HepG2 (cell line): ENCODE measurements at regions of chr3 and their contacts with region 1.

Region 1: DNA sequence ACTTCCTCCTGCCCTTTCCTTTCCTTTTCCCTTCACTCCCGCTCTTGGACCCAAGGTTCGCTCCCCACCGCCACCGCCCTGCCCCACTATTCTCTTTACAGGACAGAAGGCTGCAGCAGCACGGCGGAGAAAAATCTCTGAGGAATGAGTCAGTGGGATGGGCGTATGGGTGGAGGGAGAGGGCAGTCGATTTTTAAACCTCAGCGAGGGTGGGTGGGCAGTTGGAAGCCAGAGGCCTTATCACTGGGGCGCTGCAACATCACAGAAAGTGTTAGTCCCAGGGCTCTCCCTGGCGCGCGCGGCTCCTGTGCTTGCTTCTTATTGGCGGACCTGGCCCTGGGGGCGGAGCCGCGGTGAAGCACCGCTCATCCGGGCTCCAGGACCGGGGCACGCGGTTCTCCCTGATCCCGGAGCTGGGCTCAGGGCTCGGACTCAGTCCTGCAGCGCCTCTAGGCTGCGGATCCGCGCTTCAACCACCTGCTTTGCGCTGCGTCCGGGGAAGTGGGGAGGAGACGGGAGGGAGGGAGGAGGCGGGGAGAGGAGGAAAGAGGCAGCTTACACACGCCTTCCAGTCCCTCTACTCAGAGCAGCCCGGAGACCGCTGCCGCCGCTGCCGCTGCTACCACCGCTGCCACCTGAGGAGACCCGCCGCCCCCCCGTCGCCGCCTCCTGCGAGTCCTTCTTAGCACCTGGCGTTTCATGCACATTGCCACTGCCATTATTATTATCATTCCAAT is at the start of gene ALCAM:
- DNase-seq: peak; percentile 87
- ATAC-seq: peak; percentile 87
- H3K4me3 ChIP-seq: peak within 1 kb of the TSS; percentile 81 to 91 (median 86)
- H3K27ac ChIP-seq: peak within 1 kb of the TSS; percentile 90
- H3K4me1 ChIP-seq: peaks cover 26% of the 10 kb centered on the region
- H3K27me3 ChIP-seq: no peaks in the 10 kb centered on the region; a peak in 1 of 5 replicates
- CTCF ChIP-seq: peak; percentile 95
- EP300 ChIP-seq: no peak
- POLR2A ChIP-seq: peak in 1 of 2 experiments; percentile 72; a peak in 3 of 4 replicates
- RAD21 ChIP-seq: peak; percentile 93
- total RNA-seq, gene ALCAM: 17.7 and 33.1 TPM in 2 replicates

Region 2: GRCh38 chr3:104596551-104596950 is 769.9 kb before region 1 on chr3:
- CTCF ChIA-PET with region 1: interaction called, 3 read pairs
- POLR2A ChIA-PET with region 1: no interaction called
- in situ Hi-C with region 1: loop called (anchors 25 kb)
- intact Hi-C with region 1: loop called (anchors 2 kb)
- DNase-seq: peak; percentile 25
- ATAC-seq: peak; percentile 88
- H3K4me3 ChIP-seq: no peak overlapping the region
- H3K27ac ChIP-seq: no peak overlapping the region
- H3K4me1 ChIP-seq: no peaks in the 10 kb centered on the region
- H3K27me3 ChIP-seq: no peaks in the 10 kb centered on the region
- CTCF ChIP-seq: peak; percentile 60
- EP300 ChIP-seq: no peak
- POLR2A ChIP-seq: no peak
- RAD21 ChIP-seq: no peak

Region 3: GRCh38 chr3:104628185-104628789 is 738.2 kb before region 1 on chr3:
- CTCF ChIA-PET with region 1: no interaction called
- POLR2A ChIA-PET with region 1: no interaction called
- in situ Hi-C with region 1: loop called (anchors 25 kb)
- intact Hi-C with region 1: loop called (anchors 2 kb)
- DNase-seq: peak; percentile 32
- ATAC-seq: peak; percentile 88
- H3K4me3 ChIP-seq: no peak overlapping the region
- H3K27ac ChIP-seq: no peak overlapping the region
- H3K4me1 ChIP-seq: no peaks in the 10 kb centered on the region
- H3K27me3 ChIP-seq: no peaks in the 10 kb centered on the region
- CTCF ChIP-seq: peak; percentile 53
- EP300 ChIP-seq: no peak
- POLR2A ChIP-seq: no peak
- RAD21 ChIP-seq: no peak

Region 4: DNA sequence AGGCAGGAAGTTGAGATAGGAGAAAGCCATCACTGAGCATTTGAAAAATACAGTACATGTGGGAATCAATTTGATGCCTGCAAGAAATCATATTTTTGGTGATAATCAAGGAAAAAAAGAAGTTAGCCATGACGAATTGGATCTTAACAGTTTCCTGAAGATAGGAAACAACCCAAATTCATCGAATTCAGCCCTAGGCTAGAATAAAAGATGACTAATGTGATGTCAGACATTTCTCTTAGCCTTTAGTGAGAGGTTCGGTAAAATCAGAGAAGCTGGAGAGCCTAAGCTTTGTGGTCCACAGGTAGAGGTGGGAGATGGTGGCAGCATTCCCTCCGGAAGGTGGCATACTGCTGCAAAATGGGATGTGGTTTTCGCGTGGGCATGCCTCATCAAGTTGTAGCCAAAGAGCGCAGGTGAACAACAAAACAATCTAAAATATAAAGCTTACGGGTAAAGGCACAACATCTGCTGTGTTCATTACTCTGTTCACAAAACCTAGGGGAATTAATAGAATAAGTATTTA is 143.9 kb before region 1 on chr3:
- CTCF ChIA-PET with region 1: interaction called, 3 read pairs
- POLR2A ChIA-PET with region 1: no interaction called
- in situ Hi-C with region 1: no loop called
- intact Hi-C with region 1: loop called (anchors 1 kb)
- DNase-seq: peak; percentile 17
- ATAC-seq: peak; percentile 91
- H3K4me3 ChIP-seq: no peak overlapping the region
- H3K27ac ChIP-seq: no peak overlapping the region
- H3K4me1 ChIP-seq: no peaks in the 10 kb centered on the region
- H3K27me3 ChIP-seq: no peaks in the 10 kb centered on the region
- CTCF ChIP-seq: peak; percentile 67
- EP300 ChIP-seq: no peak
- POLR2A ChIP-seq: no peak
- RAD21 ChIP-seq: no peak

Region 5: DNA sequence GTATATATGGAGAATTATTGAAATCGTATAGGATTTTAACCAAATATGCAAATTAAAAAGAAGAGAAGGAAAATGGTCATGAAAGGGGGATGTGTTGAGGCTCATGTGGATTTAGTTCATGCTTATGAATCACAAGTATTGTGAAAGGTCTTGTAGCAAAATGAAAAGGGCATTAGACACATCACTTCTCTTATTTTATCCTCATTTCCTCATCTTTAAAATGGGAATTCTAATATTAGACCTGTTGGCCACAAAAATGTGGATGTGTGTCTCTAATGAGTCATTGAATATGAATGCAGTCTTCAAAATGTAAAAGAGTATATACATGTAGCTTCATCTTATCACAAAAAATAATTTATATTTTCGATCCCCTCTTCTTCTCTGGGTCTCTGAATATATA is 14.7 kb before region 1 on chr3:
- CTCF ChIA-PET with region 1: no interaction called
- POLR2A ChIA-PET with region 1: no interaction called
- in situ Hi-C with region 1: no loop called
- intact Hi-C with region 1: no loop called
- DNase-seq: no peak
- ATAC-seq: no peak
- H3K4me3 ChIP-seq: no peak overlapping the region
- H3K27ac ChIP-seq: no peak overlapping the region
- H3K4me1 ChIP-seq: no peaks in the 10 kb centered on the region
- H3K27me3 ChIP-seq: no peaks in the 10 kb centered on the region; a peak in 1 of 5 replicates
- CTCF ChIP-seq: no peak
- EP300 ChIP-seq: no peak
- POLR2A ChIP-seq: no peak
- RAD21 ChIP-seq: no peak

Region 6: GRCh38 chr3:105505170-105505569 is 138.7 kb after region 1 on chr3:
- CTCF ChIA-PET with region 1: no interaction called
- POLR2A ChIA-PET with region 1: interaction called, 99 read pairs
- in situ Hi-C with region 1: loop called (anchors 5 kb)
- intact Hi-C with region 1: loop called (anchors 1 kb)
- DNase-seq: no peak
- ATAC-seq: no peak
- H3K4me3 ChIP-seq: peak overlapping the region in 1 of 3 experiments; percentile 77; a peak in 1 of 6 replicates
- H3K27ac ChIP-seq: peak overlapping the region; percentile 81
- H3K4me1 ChIP-seq: peaks cover 43% of the 10 kb centered on the region
- H3K27me3 ChIP-seq: no peaks in the 10 kb centered on the region; a peak in 1 of 5 replicates
- CTCF ChIP-seq: no peak
- EP300 ChIP-seq: no peak
- POLR2A ChIP-seq: no peak
- RAD21 ChIP-seq: no peak

Region 7: DNA sequence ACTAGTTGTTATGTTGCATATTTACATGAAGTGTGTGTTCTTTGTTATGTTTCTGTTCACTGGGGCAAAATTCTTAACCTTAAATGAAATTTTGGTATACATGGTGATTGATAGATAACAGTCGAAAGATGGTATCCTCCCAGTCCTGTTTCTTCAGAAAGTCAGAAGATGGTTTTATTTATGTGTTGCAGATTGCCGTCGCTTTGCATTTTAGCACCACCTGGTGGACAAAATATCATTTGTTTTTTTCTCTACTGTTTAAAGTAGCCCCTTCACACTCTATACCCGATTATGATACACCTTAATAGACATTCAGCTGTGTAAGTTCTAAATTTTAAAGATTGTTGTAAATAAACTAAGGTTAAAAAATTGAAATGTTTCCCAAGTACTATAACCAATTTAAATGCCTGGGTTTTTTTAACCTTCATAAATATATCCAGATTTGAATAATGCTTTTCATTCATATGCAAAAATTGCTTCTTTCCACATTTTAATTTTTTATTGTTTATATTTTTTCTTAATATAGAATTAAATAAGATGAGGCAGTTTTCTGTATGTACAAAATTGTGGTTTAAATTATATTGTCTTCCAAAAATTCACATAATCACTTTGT is 152.4 kb after region 1 on chr3:
- CTCF ChIA-PET with region 1: interaction called, 7 read pairs
- POLR2A ChIA-PET with region 1: interaction called, 4 read pairs
- in situ Hi-C with region 1: loop called (anchors 5 kb)
- intact Hi-C with region 1: loop called (anchors 1 kb)
- DNase-seq: peak; percentile 35
- ATAC-seq: peak; percentile 78
- H3K4me3 ChIP-seq: no peak overlapping the region
- H3K27ac ChIP-seq: no peak overlapping the region
- H3K4me1 ChIP-seq: no peaks in the 10 kb centered on the region
- H3K27me3 ChIP-seq: no peaks in the 10 kb centered on the region
- CTCF ChIP-seq: peak; percentile 73
- EP300 ChIP-seq: no peak
- POLR2A ChIP-seq: no peak
- RAD21 ChIP-seq: peak; percentile 66